T-cell (primary cell): ENCODE measurements at regions of chr2 and their contacts with region 1.

Region 1: GRCh38 chr2:25073025-25073424 is 31.1 kb downstream of the EFR3B start:
- DNase-seq: no peak
- ATAC-seq: no peak
- H3K4me3 ChIP-seq: no peak overlapping the region
- H3K4me3 Mint-ChIP-seq: no peak overlapping the region
- H3K27ac ChIP-seq: no peak overlapping the region
- H3K27ac Mint-ChIP-seq: no peak overlapping the region
- H3K4me1 ChIP-seq: no peaks in the 10 kb centered on the region
- H3K4me1 Mint-ChIP-seq: no peaks in the 10 kb centered on the region
- H3K27me3 ChIP-seq: peaks cover 0 to 2% of the 10 kb centered on the region in 2 experiments
- H3K27me3 Mint-ChIP-seq: peaks cover 13 to 19% of the 10 kb centered on the region in 2 donors

Region 2: GRCh38 chr2:25018681-25019080 is 54.3 kb before region 1 on chr2:
- CTCF ChIA-PET with region 1: no interaction called
- POLR2A ChIA-PET with region 1: interaction called in 1 of 2 experiments, 10 read pairs
- DNase-seq: no peak
- ATAC-seq: no peak
- H3K4me3 ChIP-seq: no peak overlapping the region
- H3K4me3 Mint-ChIP-seq: no peak overlapping the region
- H3K27ac ChIP-seq: no peak overlapping the region
- H3K27ac Mint-ChIP-seq: no peak overlapping the region
- H3K4me1 ChIP-seq: no peaks in the 10 kb centered on the region
- H3K4me1 Mint-ChIP-seq: no peaks in the 10 kb centered on the region
- H3K27me3 ChIP-seq: peaks cover 0 to 8% of the 10 kb centered on the region in 2 experiments
- H3K27me3 Mint-ChIP-seq: peaks cover 6 to 9% of the 10 kb centered on the region in 2 donors

Region 3: GRCh38 chr2:25131567-25132298 is 58.7 kb after region 1 on chr2:
- CTCF ChIA-PET with region 1: no interaction called
- POLR2A ChIA-PET with region 1: no interaction called
- DNase-seq: peak in 6 of 35 experiments; percentile 10 to 20 (median 12)
- ATAC-seq: peak; percentile 25 to 54 (median 38)
- H3K4me3 ChIP-seq: peak overlapping the region in 1 of 2 donors; percentile 29
- H3K4me3 Mint-ChIP-seq: peak overlapping the region; percentile 43 to 69 (median 58)
- H3K27ac ChIP-seq: no peak overlapping the region
- H3K27ac Mint-ChIP-seq: no peak overlapping the region
- H3K4me1 ChIP-seq: peaks cover 0 to 18% of the 10 kb centered on the region in 2 experiments
- H3K4me1 Mint-ChIP-seq: peaks cover 12 to 15% (median 12%) of the 10 kb centered on the region in 3 donors
- H3K27me3 ChIP-seq: peaks cover 7 to 75% of the 10 kb centered on the region in 2 experiments
- H3K27me3 Mint-ChIP-seq: peaks cover 51 to 66% of the 10 kb centered on the region in 2 donors